Common myeloid progenitor, CD34-positive (primary cell): ENCODE measurements at regions of chr4 and their contacts with region 1.

Region 1: GRCh38 chr4:169010125-169011023 is at the start of gene CBR4:
- DNase-seq: peak; percentile 99 to 100 (median 100)
- H3K4me3 ChIP-seq: peak within 1 kb of the TSS; percentile 60 to 99 (median 92)
- H3K27ac ChIP-seq: peak within 1 kb of the TSS; percentile 84 to 94
- H3K4me1 ChIP-seq: peaks cover 10 to 28% (median 17%) of the 10 kb centered on the region in 4 experiments
- H3K27me3 ChIP-seq: no peaks in the 10 kb centered on the region

Region 2: DNA sequence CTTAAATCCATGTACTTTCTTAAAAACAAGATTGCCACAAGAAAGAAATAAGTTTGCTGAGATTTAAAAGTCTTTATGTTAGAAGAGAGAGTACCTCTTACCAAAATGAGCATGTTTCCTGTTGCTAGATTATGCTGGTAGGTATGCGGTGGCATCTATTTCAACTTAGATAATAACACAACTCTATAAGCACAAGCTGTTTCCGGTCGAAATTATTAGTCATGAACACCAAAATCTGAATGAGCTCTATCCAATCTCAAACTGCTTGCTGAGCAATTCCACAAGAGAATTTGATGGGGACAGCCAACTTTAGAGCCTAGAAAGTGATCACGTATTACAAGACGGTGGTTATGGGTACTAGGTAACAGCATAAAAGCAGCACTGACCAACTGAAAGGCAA is 49.7 kb before region 1 on chr4:
- CTCF ChIA-PET with region 1: no interaction called
- POLR2A ChIA-PET with region 1: no interaction called
- DNase-seq: no peak
- H3K4me3 ChIP-seq: no peak overlapping the region
- H3K27ac ChIP-seq: no peak overlapping the region
- H3K4me1 ChIP-seq: no peaks in the 10 kb centered on the region
- H3K27me3 ChIP-seq: no peaks in the 10 kb centered on the region

Region 3: DNA sequence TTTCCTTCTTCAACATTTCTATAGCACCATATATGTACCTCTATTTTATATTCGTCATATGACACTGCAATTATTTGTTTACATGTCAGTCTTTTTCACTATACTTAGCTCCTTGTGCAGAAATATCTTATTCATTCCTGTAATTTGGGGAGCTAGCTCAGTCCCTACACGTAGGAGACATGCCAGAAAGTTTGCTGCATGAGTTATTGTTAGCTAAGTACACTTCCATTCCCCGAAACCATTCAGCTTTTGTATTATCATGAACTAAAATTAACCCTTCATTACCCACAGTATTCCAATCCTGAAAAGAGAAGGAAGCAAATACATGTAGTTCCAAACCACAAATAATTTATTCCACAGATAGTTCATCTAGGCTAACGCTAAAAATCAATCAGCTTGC is 10.6 kb before region 1 on chr4:
- CTCF ChIA-PET with region 1: interaction called, 11 read pairs
- POLR2A ChIA-PET with region 1: no interaction called
- DNase-seq: no peak
- H3K4me3 ChIP-seq: no peak overlapping the region
- H3K27ac ChIP-seq: no peak overlapping the region
- H3K4me1 ChIP-seq: no peaks in the 10 kb centered on the region
- H3K27me3 ChIP-seq: no peaks in the 10 kb centered on the region

Region 4: DNA sequence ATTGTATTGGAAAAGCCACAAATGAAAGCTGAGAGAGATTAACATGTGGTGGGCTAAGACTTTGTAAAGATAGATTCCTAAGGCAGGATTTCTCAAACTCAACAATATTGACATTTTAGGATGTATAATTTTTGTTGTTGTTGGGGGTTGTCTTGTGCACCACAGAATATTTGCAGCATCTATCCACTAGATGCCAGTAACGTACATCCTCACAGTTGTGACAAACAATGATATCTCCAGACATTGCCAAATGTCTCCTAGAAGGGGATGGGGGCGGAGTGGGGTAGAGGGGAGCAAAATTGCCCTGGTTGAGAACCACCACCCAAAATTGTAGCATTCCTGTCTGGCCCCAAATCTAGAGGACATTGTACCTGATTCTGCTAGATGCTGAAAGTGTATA is 14.4 kb after region 1 on chr4:
- CTCF ChIA-PET with region 1: interaction called, 10 read pairs
- POLR2A ChIA-PET with region 1: no interaction called
- DNase-seq: peak; percentile 44 to 70 (median 70)
- H3K4me3 ChIP-seq: no peak overlapping the region
- H3K27ac ChIP-seq: no peak overlapping the region
- H3K4me1 ChIP-seq: no peaks in the 10 kb centered on the region
- H3K27me3 ChIP-seq: no peaks in the 10 kb centered on the region